ENCODE measurements at regions of chr2 and their contacts with region 1.

Region 1: GRCh38 chr2:99365661-99366060 is 28.5 kb downstream of the EIF5B start:
- DNase-seq: no peak
- H3K4me3 Mint-ChIP-seq: no peak overlapping the region
- H3K27ac Mint-ChIP-seq: no peak overlapping the region
- H3K4me1 Mint-ChIP-seq: peaks cover 7% of the 10 kb centered on the region
- H3K27me3 Mint-ChIP-seq: no peaks in the 10 kb centered on the region

Region 2: GRCh38 chr2:99377879-99378278 is 12.2 kb after region 1 on chr2:
- CTCF ChIA-PET with region 1: interaction called, 13 read pairs
- POLR2A ChIA-PET with region 1: no interaction called
- DNase-seq: no peak
- H3K4me3 Mint-ChIP-seq: no peak overlapping the region
- H3K27ac Mint-ChIP-seq: peak overlapping the region; percentile 38
- H3K4me1 Mint-ChIP-seq: peaks cover 17% of the 10 kb centered on the region
- H3K27me3 Mint-ChIP-seq: no peaks in the 10 kb centered on the region